ENCODE measurements at regions of chr7 and their contacts with region 1.

Region 1: DNA sequence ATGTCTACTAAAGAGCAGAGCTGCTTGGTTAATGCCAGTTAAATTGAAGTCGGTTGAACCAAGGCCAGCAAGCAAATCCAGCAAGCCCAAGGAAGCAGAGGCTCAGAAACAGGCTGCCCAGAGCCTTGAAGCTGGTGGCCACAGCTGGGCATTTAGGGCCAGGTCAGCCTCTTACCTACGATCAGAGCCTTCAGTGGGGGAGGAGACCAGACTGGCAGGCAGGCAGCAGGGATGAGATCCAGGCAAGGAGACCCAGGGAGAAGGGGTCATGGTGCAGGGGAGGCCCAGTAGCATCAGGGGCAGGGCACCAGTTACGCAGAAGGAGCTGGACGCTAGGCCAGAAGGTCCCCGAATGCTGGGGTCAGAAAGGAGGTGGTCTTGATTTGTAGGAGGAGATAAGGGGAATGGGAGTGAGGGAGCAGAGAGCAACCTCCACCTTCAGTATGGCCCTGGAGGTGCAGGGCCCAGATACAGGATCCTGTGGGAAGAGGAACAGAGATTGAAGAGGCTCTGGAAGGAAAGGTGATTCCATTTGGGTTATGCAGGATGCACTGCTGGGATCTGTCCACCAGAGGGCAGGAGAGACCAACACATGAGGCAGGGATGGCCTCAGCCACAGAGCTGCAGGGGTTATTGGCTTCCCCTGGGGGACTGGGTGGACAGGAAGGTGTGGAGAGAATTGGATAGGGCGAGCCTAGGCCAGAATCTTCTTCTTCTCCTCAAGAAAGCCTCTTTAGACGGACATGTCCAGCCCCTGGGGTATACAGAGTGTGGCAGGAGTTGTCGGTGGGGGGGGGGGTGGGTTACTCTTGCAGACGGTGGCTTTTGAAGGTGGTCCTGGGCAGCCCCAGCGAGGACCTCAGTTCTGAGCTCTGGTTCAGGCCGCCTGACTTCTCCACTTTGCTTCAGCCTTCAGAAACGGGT is 132.6 kb upstream of the PODXL start:
- DNase-seq: peak; percentile 40 to 79 (median 58)
- H3K4me3 ChIP-seq: no peak overlapping the region
- H3K27ac ChIP-seq: no peak overlapping the region
- H3K4me1 ChIP-seq: peaks cover 2% of the 10 kb centered on the region
- H3K27me3 ChIP-seq: no peaks in the 10 kb centered on the region
- CTCF ChIP-seq: peak; percentile 43 to 74 (median 72)
- EP300 ChIP-seq: no peak
- POLR2A ChIP-seq: no peak

Region 2: GRCh38 chr7:131556052-131556908 is 132.7 kb before region 1 on chr7 and contains the start of gene PODXL:
- intact Hi-C with region 1: no loop called
- DNase-seq: peak; percentile 65 to 79 (median 70)
- H3K4me3 ChIP-seq: peak within 1 kb of the TSS; percentile 65
- H3K27ac ChIP-seq: peak within 1 kb of the TSS in 1 of 2 donors; percentile 30
- H3K4me1 ChIP-seq: peaks cover 8% of the 10 kb centered on the region
- H3K27me3 ChIP-seq: no peaks in the 10 kb centered on the region
- CTCF ChIP-seq: no peak
- EP300 ChIP-seq: no peak
- POLR2A ChIP-seq: no peak
- total RNA-seq, gene PODXL: 15.9 to 85.1 (median 34.8) TPM

Region 3: GRCh38 chr7:131745390-131746248 is 56.6 kb after region 1 on chr7:
- intact Hi-C with region 1: no loop called
- DNase-seq: peak in 2 of 5 donors; percentile 13 to 63
- H3K4me3 ChIP-seq: no peak overlapping the region
- H3K27ac ChIP-seq: no peak overlapping the region
- H3K4me1 ChIP-seq: no peaks in the 10 kb centered on the region
- H3K27me3 ChIP-seq: no peaks in the 10 kb centered on the region
- CTCF ChIP-seq: no peak
- EP300 ChIP-seq: no peak
- POLR2A ChIP-seq: no peak

Region 4: DNA sequence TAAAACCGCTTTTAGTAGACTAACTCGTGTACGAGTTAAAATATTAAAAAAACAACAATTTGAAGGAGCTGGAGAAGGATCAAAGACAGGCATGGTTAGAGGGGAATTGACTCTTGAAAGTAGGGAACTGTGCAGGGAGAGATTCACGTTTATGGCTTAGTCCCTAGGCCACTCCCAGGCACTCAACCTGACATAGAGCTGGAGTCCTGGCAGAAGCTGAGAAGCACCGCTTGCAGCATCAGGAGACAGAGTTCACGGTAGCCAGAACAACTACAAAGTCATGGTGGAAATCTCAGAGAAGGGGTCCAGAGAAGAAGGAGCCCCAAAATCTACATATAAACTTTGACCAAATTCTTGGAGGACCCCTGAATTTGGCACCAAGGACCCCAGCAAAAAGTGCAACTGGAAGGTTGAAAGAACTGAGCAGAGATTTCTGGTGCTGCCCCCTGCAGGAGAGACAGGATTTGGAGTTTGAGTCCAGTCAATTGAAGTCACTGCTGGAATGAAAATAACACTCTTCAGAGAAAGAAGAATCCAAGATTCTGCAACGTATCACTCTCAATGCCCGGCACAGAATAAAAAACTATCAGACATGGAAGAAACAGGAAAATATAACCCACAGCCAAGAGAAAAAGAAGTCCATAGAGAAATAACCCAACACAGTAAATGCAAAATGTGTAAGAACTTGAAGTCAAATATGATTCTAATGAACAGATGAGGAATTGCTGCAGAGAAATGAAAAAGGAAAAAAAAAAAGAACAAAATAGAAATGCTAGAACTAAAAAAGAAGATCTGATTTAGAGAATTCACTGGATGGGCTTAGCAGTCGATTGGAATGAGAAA is 360.7 kb after region 1 on chr7:
- intact Hi-C with region 1: loop called in 1 of 4 experiments (anchors 10 kb)
- DNase-seq: no peak
- H3K4me3 ChIP-seq: no peak overlapping the region
- H3K27ac ChIP-seq: no peak overlapping the region
- H3K4me1 ChIP-seq: no peaks in the 10 kb centered on the region
- H3K27me3 ChIP-seq: no peaks in the 10 kb centered on the region
- CTCF ChIP-seq: no peak
- EP300 ChIP-seq: no peak
- POLR2A ChIP-seq: no peak

Measured in ovary (tissue), 10 donors.